Left cardiac atrium (tissue), 4 donors: ENCODE measurements at regions of chr3 and their contacts with region 1.

Region 1: DNA sequence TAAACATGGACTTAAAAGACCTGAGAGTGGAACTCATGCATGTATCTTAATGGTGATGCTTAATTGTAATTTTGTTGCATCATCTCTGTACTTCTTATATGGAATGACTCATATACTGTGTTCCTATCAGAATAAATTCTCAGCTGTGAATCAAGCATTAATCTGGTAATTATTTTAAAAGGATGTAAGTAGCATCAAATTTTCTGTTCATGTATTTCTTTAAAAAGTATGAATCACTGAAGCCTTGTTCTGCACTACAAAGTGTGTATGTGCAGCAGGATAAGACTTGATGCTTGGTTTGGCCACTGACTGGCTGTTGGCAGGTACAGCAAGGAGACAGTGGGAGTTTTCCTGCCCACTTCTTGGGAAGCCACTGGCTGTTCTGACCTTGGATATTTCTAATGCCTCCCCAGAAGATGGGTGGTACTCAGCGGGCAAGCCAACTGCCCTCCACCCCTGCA is 123.9 kb downstream of the ANO10 start:
- DNase-seq: peak; percentile 60
- ATAC-seq: peak; percentile 41 to 71

Region 2: DNA sequence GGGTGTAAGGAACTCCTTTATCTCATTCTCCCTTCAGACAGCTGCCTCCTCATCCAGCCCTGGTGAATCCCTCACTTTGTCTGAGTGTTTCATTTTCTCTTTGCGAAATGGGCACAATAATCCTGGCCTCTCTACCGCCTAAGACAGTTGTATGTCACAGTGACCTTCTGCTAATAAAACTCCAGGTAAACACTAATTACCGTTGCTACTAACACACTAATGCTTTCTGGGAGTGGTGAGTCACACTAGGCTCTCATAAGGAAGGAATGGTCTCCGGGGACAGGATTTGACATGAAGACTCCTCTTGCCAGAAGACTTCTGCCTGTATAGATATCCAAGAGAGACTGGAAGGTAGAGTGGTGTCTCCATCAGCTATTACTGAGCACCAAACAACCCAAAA is 283.3 kb before region 1 on chr3:
- intact Hi-C with region 1: no loop called
- DNase-seq: no peak
- ATAC-seq: no peak

Region 3: DNA sequence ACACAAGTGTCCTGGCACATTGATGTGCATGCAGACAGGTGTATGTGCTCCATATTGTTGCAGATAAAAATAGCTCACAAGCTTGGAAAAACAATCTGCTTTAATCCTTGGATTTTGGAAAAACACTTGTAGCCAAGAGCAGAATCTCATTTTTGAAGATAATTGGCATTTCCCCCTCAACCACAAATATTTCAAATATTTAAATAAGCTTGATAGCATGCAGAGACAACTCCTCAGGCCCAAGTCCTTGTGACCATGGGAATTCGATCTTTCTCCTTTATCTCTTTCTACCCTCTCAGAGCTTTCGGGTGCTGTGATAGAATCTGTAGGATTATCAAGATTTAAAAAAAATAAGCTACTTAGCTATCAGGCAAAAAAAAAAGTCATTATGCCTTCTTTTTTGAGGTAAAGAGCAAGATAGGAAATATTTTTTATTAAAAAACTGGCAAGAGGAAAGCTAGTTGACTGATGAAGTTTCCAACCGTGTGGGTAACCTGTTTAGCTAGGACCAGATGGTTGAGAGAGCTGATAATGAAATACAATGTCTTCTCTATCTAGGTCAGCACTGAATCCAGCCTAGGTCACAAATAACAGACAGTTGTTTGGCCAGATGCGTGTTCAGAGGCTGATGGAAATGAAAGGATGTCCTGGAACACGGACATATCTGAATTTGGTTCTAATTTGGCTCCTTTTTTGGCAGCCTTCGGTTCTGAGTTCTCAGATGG is 266.5 kb before region 1 on chr3:
- intact Hi-C with region 1: no loop called
- DNase-seq: no peak
- ATAC-seq: no peak

Region 4: DNA sequence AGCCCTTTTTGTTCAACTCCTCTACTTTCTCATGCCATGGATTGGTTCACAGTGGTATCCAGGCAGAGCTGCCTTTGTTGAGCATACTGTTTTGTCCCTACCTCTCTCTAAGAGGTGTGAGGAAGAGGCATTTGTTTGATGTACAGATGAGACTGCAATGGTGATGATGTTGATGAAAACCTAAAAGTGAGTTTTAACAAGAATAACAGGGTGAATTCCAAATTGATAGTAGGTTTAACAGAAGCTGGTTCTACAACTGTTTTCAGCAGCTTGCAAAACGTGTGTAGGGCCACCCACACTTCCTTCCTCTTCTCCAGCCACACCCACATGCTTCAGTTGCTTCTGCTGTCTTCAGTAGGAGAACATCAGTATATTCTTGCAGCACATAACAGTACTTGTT is 201.4 kb before region 1 on chr3:
- intact Hi-C with region 1: no loop called
- DNase-seq: no peak
- ATAC-seq: peak; percentile 57 to 75

Region 5: GRCh38 chr3:43353923-43354670 is 143.8 kb before region 1 on chr3:
- intact Hi-C with region 1: no loop called
- DNase-seq: no peak
- ATAC-seq: peak in 1 of 2 donors; percentile 34

Region 6: GRCh38 chr3:43423142-43423541 is 74.8 kb before region 1 on chr3:
- intact Hi-C with region 1: loop called in 1 of 2 experiments (anchors 10 kb)
- DNase-seq: peak; percentile 30
- ATAC-seq: peak; percentile 42 to 64